ENCODE measurements at regions of chr15 and their contacts with region 1.

Region 1: DNA sequence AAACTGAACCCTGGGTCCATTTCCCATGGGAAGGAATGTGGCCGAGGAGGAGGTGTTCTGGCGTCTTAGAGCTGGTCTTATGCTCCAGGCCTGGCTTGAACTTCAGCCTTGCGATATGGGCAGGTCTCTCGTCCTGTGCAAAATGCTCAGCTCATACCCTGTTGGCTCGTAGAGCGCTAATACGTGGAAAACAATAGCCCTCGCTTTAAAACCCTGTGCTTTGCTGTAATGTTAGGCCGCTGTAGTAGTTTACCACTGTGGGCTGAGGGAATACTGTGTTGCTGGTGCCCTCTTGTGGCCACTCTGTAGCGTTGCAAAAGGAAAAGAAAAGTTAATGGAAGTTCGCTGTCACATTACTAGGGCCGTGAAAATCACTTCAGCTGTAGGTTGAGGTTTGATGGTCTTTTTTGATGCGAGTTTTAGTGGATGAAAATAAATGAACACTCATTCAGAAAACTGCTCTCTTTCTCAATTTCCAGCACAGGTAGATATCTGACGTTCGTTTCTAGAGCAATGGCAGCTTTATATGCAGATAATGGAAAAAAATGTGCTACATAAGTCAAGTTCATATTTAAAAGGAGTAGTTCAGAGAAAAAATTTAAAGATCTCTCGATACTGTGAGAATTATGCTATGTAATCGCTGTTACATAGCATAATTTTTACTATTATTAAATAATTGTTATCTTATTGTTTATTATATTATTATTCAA is 92.9 kb downstream of the MCTP2 start:
- DNase-seq: peak; percentile 73
- ATAC-seq: peak; percentile 87
- H3K4me3 Mint-ChIP-seq: no peak overlapping the region
- H3K27ac Mint-ChIP-seq: peak overlapping the region; percentile 51
- H3K4me1 Mint-ChIP-seq: peaks cover 11% of the 10 kb centered on the region
- H3K27me3 Mint-ChIP-seq: no peaks in the 10 kb centered on the region
- CTCF ChIP-seq: peak; percentile 87

Region 2: GRCh38 chr15:94163999-94164807 is 160.1 kb before region 1 on chr15:
- CTCF ChIA-PET with region 1: interaction called, 325 read pairs
- POLR2A ChIA-PET with region 1: interaction called, 4 read pairs
- intact Hi-C with region 1: loop called (anchors 1 kb)
- DNase-seq: peak; percentile 74
- ATAC-seq: peak; percentile 72
- H3K4me3 Mint-ChIP-seq: no peak overlapping the region
- H3K27ac Mint-ChIP-seq: no peak overlapping the region
- H3K4me1 Mint-ChIP-seq: no peaks in the 10 kb centered on the region
- H3K27me3 Mint-ChIP-seq: peaks cover 4% of the 10 kb centered on the region
- CTCF ChIP-seq: peak; percentile 98

Region 3: DNA sequence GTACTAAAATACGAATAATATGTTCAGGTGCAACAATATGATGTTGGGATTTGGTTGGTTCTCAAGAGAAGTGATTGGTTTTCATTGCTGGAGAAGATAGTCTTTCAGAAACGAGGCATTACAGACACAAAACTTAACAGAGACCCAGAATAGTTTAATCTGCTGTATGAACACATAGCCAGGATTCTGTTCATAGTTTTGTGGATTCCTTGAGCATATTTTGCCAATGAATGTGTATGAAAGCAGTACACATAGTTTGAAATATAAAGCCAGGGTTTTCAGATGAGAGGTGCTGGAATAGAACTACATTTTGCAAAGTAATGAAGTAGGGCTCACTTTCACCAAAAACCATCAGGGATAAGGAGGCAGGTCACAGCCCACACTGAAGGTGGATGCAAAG is 98.7 kb before region 1 on chr15:
- CTCF ChIA-PET with region 1: interaction called, 40 read pairs
- POLR2A ChIA-PET with region 1: interaction called, 16 read pairs
- intact Hi-C with region 1: loop called (anchors 5 kb)
- DNase-seq: no peak
- ATAC-seq: no peak
- H3K4me3 Mint-ChIP-seq: no peak overlapping the region
- H3K27ac Mint-ChIP-seq: no peak overlapping the region
- H3K4me1 Mint-ChIP-seq: peaks cover 31% of the 10 kb centered on the region
- H3K27me3 Mint-ChIP-seq: peaks cover 5% of the 10 kb centered on the region
- CTCF ChIP-seq: no peak

Region 4: GRCh38 chr15:94238539-94239118 is 85.6 kb before region 1 on chr15:
- CTCF ChIA-PET with region 1: interaction called, 11 read pairs
- POLR2A ChIA-PET with region 1: interaction called, 3 read pairs
- intact Hi-C with region 1: loop called (anchors 5 kb)
- DNase-seq: no peak
- ATAC-seq: peak; percentile 60
- H3K4me3 Mint-ChIP-seq: no peak overlapping the region
- H3K27ac Mint-ChIP-seq: peak overlapping the region; percentile 22
- H3K4me1 Mint-ChIP-seq: peaks cover 60% of the 10 kb centered on the region
- H3K27me3 Mint-ChIP-seq: no peaks in the 10 kb centered on the region
- CTCF ChIP-seq: no peak

Region 5: GRCh38 chr15:94287794-94288246 is 36.5 kb before region 1 on chr15:
- CTCF ChIA-PET with region 1: interaction called, 11 read pairs
- POLR2A ChIA-PET with region 1: no interaction called
- intact Hi-C with region 1: no loop called
- DNase-seq: peak; percentile 78
- ATAC-seq: peak; percentile 97
- H3K4me3 Mint-ChIP-seq: peak overlapping the region; percentile 71
- H3K27ac Mint-ChIP-seq: peak overlapping the region; percentile 89
- H3K4me1 Mint-ChIP-seq: peaks cover 39% of the 10 kb centered on the region
- H3K27me3 Mint-ChIP-seq: no peaks in the 10 kb centered on the region
- CTCF ChIP-seq: no peak

Region 6: GRCh38 chr15:94335616-94336015 is 11.3 kb after region 1 on chr15:
- CTCF ChIA-PET with region 1: interaction called, 39 read pairs
- POLR2A ChIA-PET with region 1: interaction called, 3 read pairs
- intact Hi-C with region 1: no loop called
- DNase-seq: no peak
- ATAC-seq: no peak
- H3K4me3 Mint-ChIP-seq: no peak overlapping the region
- H3K27ac Mint-ChIP-seq: no peak overlapping the region
- H3K4me1 Mint-ChIP-seq: no peaks in the 10 kb centered on the region
- H3K27me3 Mint-ChIP-seq: no peaks in the 10 kb centered on the region
- CTCF ChIP-seq: no peak

Region 7: GRCh38 chr15:94387849-94388441 is 63.7 kb after region 1 on chr15:
- CTCF ChIA-PET with region 1: no interaction called
- POLR2A ChIA-PET with region 1: no interaction called
- intact Hi-C with region 1: no loop called
- DNase-seq: peak; percentile 21
- ATAC-seq: peak; percentile 30
- H3K4me3 Mint-ChIP-seq: no peak overlapping the region
- H3K27ac Mint-ChIP-seq: no peak overlapping the region
- H3K4me1 Mint-ChIP-seq: peaks cover 16% of the 10 kb centered on the region
- H3K27me3 Mint-ChIP-seq: no peaks in the 10 kb centered on the region
- CTCF ChIP-seq: no peak

Measured in activated CD8-positive, alpha-beta T cell treated with anti-CD3 and anti-CD28 coated beads for 36 hours (primary cell).